ENCODE measurements at regions of chr6 and their contacts with region 1.

Region 1: DNA sequence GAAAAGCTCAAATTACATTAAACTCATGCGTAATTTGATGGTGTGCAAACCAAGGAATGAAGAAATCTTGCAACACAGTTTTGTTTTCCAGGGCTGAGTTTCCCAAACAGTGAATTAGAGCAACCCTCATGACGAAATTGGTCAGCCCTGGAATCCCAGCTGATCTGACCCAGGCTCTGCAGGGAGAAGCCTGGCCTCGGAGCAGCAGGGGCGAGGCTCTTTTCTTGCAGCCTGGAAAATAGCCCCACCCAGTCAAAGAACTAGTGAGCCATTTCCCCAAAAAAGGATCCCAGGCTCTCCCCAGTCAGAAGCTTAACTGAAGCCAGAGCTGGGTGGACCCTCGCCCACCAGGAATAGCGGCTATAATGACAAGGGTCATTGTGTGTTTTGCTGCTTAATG is 107.3 kb upstream of the SNX9 start:
- DNase-seq: peak; percentile 98
- H3K4me3 Mint-ChIP-seq: peak overlapping the region; percentile 70
- H3K27ac Mint-ChIP-seq: peak overlapping the region; percentile 100
- H3K4me1 Mint-ChIP-seq: peaks cover 42% of the 10 kb centered on the region
- H3K27me3 Mint-ChIP-seq: no peaks in the 10 kb centered on the region
- CTCF ChIP-seq: no peak

Region 2: DNA sequence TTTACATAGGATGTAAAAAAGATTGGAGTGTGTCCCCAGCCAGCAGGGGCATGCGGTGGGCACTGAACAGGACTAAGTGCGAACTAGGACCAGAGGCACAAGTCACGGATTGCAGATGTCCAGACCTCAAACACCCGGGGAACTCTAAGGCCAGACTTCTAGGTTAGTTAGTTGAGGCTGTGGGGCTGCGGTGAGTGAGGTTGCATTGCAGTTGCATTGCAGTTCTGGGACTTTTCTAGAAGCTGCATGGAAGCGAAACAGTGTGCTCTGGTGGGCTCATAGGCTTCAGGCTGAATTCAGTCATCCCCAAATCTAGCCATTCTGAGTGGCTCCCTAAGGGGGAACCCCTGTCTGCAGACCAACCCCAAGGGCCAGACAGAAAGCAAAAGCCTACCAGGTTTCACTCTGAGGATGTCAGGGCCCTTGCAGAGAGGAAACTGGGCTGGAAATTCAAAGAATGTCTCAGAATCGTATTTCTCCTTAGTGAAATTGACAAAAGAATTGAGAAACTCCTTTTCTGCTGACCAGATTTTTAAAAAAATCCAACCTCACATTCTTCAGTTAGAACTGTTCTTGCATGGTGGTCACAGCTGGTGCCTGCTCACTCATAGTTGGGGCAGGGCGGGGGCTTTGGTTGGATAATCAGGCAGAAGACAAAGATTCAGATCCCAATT is 152.0 kb before region 1 on chr6:
- CTCF ChIA-PET with region 1: no interaction called
- POLR2A ChIA-PET with region 1: no interaction called
- intact Hi-C with region 1: no loop called
- DNase-seq: no peak
- H3K4me3 Mint-ChIP-seq: no peak overlapping the region
- H3K27ac Mint-ChIP-seq: no peak overlapping the region
- H3K4me1 Mint-ChIP-seq: no peaks in the 10 kb centered on the region
- H3K27me3 Mint-ChIP-seq: no peaks in the 10 kb centered on the region
- CTCF ChIP-seq: no peak

Region 3: DNA sequence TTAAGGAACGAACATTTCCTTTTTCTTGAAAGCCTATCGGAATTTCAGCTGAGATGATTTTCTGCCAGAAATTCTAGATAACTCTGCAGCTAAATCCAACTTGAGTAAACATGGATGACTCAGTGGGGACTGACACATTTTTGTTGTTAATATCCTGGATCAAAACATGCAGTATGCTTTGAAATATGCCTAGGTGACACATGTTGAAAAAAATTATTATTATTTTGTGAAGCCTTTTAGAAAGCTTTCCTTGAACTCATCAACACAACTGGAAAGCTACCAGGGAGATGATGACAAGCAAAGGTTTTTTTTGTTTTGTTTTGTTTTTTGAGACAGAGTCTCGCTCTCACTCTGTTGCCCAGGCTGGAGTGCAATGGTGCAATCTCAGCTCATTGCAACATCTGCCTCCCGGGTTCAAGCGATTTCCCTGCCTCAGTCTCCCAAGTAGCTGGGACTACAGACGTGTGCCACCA is 32.8 kb before region 1 on chr6:
- CTCF ChIA-PET with region 1: interaction called, 4 read pairs
- POLR2A ChIA-PET with region 1: interaction called, 18 read pairs
- intact Hi-C with region 1: loop called (anchors 1 kb)
- DNase-seq: peak; percentile 64
- H3K4me3 Mint-ChIP-seq: no peak overlapping the region
- H3K27ac Mint-ChIP-seq: peak overlapping the region; percentile 58
- H3K4me1 Mint-ChIP-seq: no peaks in the 10 kb centered on the region
- H3K27me3 Mint-ChIP-seq: no peaks in the 10 kb centered on the region
- CTCF ChIP-seq: no peak

Region 4: DNA sequence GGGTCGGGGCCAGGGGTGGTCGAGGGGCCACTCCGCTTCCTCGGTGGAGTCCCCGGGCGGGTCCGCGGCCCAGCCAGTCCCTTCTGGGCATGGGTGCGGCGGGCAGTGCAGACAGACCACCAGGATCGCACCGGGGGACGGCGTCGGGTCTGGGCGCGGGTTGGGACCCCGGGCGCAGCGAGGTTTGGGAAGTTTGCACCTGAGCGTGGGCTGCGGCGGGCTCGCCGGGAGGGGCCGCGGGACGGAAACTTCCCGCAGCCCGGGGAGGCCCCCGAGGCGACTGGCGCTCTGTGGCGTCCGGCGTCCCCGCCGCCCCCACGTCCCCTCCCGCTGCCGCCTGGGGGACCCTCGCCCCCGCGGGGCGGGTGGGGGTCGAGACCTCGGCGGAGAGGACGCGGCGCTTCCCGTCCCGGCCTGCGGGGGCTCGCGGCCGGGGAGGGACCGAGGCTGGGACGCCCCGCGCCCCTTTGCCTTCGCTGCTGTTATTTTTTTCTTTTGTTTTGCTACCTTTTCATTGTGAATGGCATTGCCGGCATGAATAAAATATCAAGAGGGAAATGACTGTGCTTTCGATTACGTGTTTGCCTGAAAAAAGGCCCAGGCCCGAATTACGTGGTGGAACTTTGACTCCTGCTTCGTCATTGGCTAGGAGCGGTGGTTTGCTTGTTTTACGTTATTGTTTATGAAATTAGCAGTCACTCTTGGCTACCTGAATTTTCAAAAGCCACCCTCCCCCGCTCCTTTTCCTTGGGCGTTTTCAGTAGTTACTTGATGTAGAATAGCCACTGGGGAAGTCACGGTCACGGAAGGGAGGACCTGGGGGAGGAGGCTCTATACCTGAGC is 108.0 kb after region 1 on chr6:
- CTCF ChIA-PET with region 1: no interaction called
- POLR2A ChIA-PET with region 1: interaction called, 10 read pairs
- intact Hi-C with region 1: no loop called
- DNase-seq: peak; percentile 73
- H3K4me3 Mint-ChIP-seq: peak overlapping the region; percentile 91
- H3K27ac Mint-ChIP-seq: peak overlapping the region; percentile 99
- H3K4me1 Mint-ChIP-seq: peaks cover 6% of the 10 kb centered on the region
- H3K27me3 Mint-ChIP-seq: no peaks in the 10 kb centered on the region
- CTCF ChIP-seq: no peak